ENCODE measurements at regions of chr15 and their contacts with region 1.

Region 1: GRCh38 chr15:90101969-90102890 is at the start of gene IDH2:
- DNase-seq: peak; percentile 76
- H3K4me3 Mint-ChIP-seq: peak within 1 kb of the TSS; percentile 86
- H3K27ac Mint-ChIP-seq: peak within 1 kb of the TSS; percentile 67
- H3K4me1 Mint-ChIP-seq: peaks cover 50% of the 10 kb centered on the region
- H3K27me3 Mint-ChIP-seq: no peaks in the 10 kb centered on the region
- total RNA-seq, gene IDH2: 170 to 175 TPM

Region 2: DNA sequence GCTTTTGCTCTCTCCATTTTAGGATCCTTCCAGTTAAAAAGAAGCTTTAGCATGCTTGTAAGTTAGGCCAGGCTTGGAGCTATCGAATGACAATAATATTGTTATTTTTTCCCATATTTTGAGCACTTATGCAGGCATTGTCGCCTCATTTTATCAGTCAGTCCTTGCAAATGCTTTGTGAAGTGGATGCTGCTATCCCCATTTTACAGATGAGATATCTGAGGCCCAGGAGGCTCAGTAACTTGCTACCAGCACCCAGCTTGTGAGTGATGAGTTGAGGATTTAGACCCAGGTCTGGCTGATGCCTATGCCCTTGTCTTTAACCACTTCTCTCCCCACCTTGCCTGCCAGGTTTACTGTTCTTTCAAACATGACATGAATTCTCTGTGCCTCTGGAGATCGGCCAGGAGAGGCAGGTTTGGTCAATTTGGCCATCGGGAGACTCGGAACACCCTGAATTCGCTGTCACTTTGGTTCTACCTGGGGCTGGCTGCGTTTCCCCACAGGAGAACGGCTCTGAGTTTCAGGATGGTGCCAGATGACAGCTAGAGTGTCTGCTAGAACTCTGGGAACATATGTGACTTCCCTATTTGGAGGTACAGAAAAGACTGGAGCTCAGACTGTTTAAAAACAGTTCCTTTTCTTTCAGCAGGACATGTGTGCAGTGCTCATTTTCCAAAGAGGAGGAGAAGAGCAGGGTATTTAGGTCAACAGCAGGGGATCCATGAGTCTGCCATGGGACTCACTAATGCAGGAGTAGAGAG is 126.6 kb before region 1 on chr15:
- CTCF ChIA-PET with region 1: no interaction called
- POLR2A ChIA-PET with region 1: no interaction called
- intact Hi-C with region 1: no loop called
- DNase-seq: no peak
- H3K4me3 Mint-ChIP-seq: no peak overlapping the region
- H3K27ac Mint-ChIP-seq: no peak overlapping the region
- H3K4me1 Mint-ChIP-seq: no peaks in the 10 kb centered on the region
- H3K27me3 Mint-ChIP-seq: no peaks in the 10 kb centered on the region

Region 3: GRCh38 chr15:90037961-90038631 is 64.1 kb before region 1 on chr15:
- CTCF ChIA-PET with region 1: no interaction called
- POLR2A ChIA-PET with region 1: interaction called, 5 read pairs
- intact Hi-C with region 1: loop called (anchors 2 kb)
- DNase-seq: peak; percentile 82
- H3K4me3 Mint-ChIP-seq: peak overlapping the region; percentile 27
- H3K27ac Mint-ChIP-seq: peak overlapping the region; percentile 96
- H3K4me1 Mint-ChIP-seq: peaks cover 73% of the 10 kb centered on the region
- H3K27me3 Mint-ChIP-seq: no peaks in the 10 kb centered on the region

Region 4: DNA sequence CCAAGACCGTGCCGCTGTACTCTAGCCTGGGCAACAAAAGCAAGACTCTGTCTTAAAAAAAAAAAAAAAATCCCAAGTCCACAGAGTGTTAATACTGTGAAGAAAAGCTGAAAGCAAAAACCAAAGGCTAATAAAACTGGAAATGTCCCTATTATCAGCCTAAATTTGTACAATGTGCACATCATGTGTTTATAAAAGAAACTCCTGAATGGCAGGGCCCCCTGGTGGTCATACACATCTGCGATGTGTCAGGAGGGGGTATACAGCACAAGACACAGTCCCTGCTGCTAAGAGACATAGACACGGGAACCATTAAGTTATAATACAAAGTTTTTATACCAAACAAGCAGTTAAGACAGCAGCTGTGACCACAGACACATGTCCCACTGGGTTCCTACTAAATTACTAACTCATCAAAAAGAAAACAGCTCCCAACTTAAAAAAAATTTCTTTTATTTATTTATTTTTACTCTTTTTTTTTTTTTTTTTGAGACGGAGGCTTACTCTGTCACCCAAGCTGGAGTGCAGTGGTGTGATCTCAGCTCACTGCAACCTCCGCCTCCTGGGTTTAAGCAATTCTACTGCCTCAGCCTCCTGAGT is 30.9 kb before region 1 on chr15:
- CTCF ChIA-PET with region 1: interaction called, 5 read pairs
- POLR2A ChIA-PET with region 1: no interaction called
- intact Hi-C with region 1: loop called (anchors 1 kb)
- DNase-seq: peak; percentile 84
- H3K4me3 Mint-ChIP-seq: no peak overlapping the region
- H3K27ac Mint-ChIP-seq: no peak overlapping the region
- H3K4me1 Mint-ChIP-seq: peaks cover 21% of the 10 kb centered on the region
- H3K27me3 Mint-ChIP-seq: no peaks in the 10 kb centered on the region

Region 5: DNA sequence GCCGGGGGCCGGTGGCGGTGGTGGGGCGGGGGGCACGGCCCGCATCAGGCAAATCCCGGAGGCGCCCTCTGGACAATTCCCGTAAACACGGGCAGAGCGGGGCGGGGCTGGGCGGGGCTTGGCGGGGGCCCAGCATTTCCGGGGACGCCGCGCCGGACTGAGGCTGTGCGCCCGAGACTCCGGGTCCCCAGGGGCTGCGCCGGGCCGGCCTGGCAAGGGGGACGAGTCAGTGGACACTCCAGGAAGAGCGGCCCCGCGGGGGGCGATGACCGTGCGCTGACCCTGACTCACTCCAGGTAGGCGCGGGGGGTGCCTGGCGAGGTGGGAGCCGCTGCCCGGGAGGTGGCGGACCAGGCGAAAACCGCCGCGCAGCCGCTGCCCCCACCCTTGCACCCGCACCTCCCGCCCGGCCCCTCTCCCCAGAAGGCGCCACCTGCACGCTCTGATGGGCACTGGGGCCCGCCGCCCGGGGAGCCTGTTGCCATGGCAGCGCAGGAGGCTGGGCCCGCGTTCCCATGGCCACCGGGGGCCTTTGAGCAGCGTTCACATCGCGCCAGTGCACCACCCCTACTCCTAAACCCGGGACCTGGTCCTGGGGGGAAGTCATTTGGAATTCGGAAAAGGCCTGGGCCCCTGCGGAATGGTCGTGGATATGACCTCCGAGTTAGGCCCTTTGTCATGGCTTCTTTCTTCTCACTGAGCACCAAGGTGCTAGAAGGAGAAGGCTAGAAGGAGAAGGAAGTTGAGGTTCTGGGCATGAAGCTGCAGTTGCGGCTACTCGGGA is 82.7 kb after region 1 on chr15:
- CTCF ChIA-PET with region 1: no interaction called
- POLR2A ChIA-PET with region 1: no interaction called
- intact Hi-C with region 1: no loop called
- DNase-seq: peak; percentile 70
- H3K4me3 Mint-ChIP-seq: peak overlapping the region; percentile 81
- H3K27ac Mint-ChIP-seq: peak overlapping the region; percentile 78
- H3K4me1 Mint-ChIP-seq: peaks cover 14% of the 10 kb centered on the region
- H3K27me3 Mint-ChIP-seq: no peaks in the 10 kb centered on the region

Region 6: DNA sequence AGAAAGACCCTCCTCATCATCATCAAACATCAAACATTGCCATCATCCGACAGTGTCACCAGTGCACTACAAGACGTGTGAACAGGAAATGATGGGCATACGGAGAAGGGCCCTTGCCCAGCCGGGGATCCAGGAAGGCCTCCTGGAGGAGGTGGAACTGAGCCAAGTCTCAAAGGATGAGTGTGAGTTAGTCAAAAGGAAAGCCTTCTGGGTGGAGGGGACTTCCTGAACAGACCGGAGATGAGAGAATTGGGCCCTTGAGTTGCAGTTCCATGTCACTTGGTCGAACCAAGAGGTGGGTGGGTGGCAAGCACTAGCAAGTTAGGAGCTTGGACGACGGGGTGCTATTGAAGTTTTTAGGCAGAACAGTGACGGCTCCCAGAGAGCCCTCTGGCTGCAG is 107.4 kb after region 1 on chr15:
- CTCF ChIA-PET with region 1: no interaction called
- POLR2A ChIA-PET with region 1: no interaction called
- intact Hi-C with region 1: loop called (anchors 5 kb)
- DNase-seq: peak; percentile 86
- H3K4me3 Mint-ChIP-seq: peak overlapping the region; percentile 28
- H3K27ac Mint-ChIP-seq: peak overlapping the region; percentile 83
- H3K4me1 Mint-ChIP-seq: peaks cover 35% of the 10 kb centered on the region
- H3K27me3 Mint-ChIP-seq: no peaks in the 10 kb centered on the region

Measured in activated CD4-positive, alpha-beta memory T cell treated with anti-CD3 and anti-CD28 coated beads for 36 hours (primary cell).